ENCODE measurements at regions of chr1 and their contacts with region 1.

Region 1: GRCh38 chr1:151399890-151400495 is 620 bp downstream of the PSMB4 start:
- DNase-seq: peak; percentile 27
- H3K4me3 Mint-ChIP-seq: peak overlapping the region; percentile 93
- H3K27ac Mint-ChIP-seq: peak overlapping the region; percentile 99
- H3K4me1 Mint-ChIP-seq: peaks cover 20% of the 10 kb centered on the region
- H3K27me3 Mint-ChIP-seq: no peaks in the 10 kb centered on the region
- CTCF ChIP-seq: no peak

Region 2: GRCh38 chr1:151281969-151282882 is 117.8 kb before region 1 on chr1 and contains the start of gene ZNF687:
- CTCF ChIA-PET with region 1: interaction called, 4 read pairs
- POLR2A ChIA-PET with region 1: interaction called, 13 read pairs
- intact Hi-C with region 1: loop called (anchors 1 kb)
- DNase-seq: peak; percentile 100
- H3K4me3 Mint-ChIP-seq: peak within 1 kb of the TSS; percentile 97
- H3K27ac Mint-ChIP-seq: peak within 1 kb of the TSS; percentile 99
- H3K4me1 Mint-ChIP-seq: peaks cover 19% of the 10 kb centered on the region
- H3K27me3 Mint-ChIP-seq: peaks cover 9% of the 10 kb centered on the region
- CTCF ChIP-seq: no peak
- total RNA-seq, gene ZNF687: 26.3 and 27.5 TPM in 2 replicates

Region 3: GRCh38 chr1:151327223-151327902 is 72.6 kb before region 1 on chr1 and contains the start of gene PI4KB:
- CTCF ChIA-PET with region 1: interaction called, 3 read pairs
- POLR2A ChIA-PET with region 1: interaction called, 53 read pairs
- intact Hi-C with region 1: no loop called
- DNase-seq: peak; percentile 100
- H3K4me3 Mint-ChIP-seq: peak within 1 kb of the TSS; percentile 89
- H3K27ac Mint-ChIP-seq: peak within 1 kb of the TSS; percentile 90
- H3K4me1 Mint-ChIP-seq: peaks cover 36% of the 10 kb centered on the region
- H3K27me3 Mint-ChIP-seq: no peaks in the 10 kb centered on the region
- CTCF ChIP-seq: no peak
- total RNA-seq, gene PI4KB: 75.3 and 90.1 TPM in 2 replicates

Region 4: DNA sequence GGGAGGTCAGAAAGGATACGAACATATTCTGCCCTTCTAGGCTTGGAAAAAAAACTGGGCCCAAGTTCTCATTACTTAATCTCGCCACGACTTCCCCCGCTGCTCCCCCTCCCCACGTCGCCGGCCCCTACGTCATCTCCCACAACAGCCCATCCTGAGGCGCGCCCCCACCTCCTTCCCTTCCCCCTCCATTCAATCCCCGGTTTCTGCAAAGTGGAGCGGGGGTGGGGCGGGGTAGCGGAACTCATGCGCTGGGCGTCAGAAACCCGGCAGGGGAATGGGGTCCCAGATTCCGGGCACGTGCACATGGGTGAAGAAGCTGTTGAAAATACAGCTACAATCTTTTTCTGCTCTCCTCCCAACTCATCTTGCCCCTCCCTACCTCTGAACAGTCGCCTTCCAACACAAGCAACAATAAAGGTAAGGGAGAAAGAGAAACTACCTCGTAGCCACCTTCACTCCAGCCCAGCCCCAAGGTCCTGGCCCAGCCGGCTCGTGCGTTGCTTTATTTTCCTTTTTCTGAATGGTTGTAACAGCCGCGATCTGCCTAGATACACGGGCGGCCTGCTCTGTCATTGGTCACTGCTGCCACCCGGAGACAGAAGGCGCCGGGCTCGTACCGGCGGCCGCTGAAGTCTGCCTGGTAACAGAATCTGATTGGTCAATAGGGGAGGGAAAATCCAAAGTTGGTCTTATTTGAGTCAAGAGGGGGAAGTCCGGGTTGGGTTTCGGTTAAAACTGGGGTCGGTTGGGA is 53.0 kb before region 1 on chr1 and contains the start of gene RFX5:
- CTCF ChIA-PET with region 1: interaction called, 4 read pairs
- POLR2A ChIA-PET with region 1: interaction called, 12 read pairs
- intact Hi-C with region 1: loop called (anchors 1 kb)
- DNase-seq: peak; percentile 99
- H3K4me3 Mint-ChIP-seq: peak within 1 kb of the TSS; percentile 94
- H3K27ac Mint-ChIP-seq: peak within 1 kb of the TSS; percentile 97
- H3K4me1 Mint-ChIP-seq: peaks cover 28% of the 10 kb centered on the region
- H3K27me3 Mint-ChIP-seq: no peaks in the 10 kb centered on the region
- CTCF ChIP-seq: no peak
- total RNA-seq, gene RFX5: 19.2 and 26.5 TPM in 2 replicates

Region 5: GRCh38 chr1:151372061-151372934 is 27.7 kb before region 1 on chr1 and contains the start of gene SELENBP1:
- CTCF ChIA-PET with region 1: interaction called, 7 read pairs
- POLR2A ChIA-PET with region 1: interaction called, 60 read pairs
- intact Hi-C with region 1: no loop called
- DNase-seq: peak; percentile 94
- H3K4me3 Mint-ChIP-seq: peak within 1 kb of the TSS; percentile 69
- H3K27ac Mint-ChIP-seq: peak within 1 kb of the TSS; percentile 13
- H3K4me1 Mint-ChIP-seq: peaks cover 25% of the 10 kb centered on the region
- H3K27me3 Mint-ChIP-seq: peaks cover 7% of the 10 kb centered on the region
- CTCF ChIP-seq: no peak
- total RNA-seq, gene SELENBP1: 8.2 and 11.6 TPM in 2 replicates

Region 6: DNA sequence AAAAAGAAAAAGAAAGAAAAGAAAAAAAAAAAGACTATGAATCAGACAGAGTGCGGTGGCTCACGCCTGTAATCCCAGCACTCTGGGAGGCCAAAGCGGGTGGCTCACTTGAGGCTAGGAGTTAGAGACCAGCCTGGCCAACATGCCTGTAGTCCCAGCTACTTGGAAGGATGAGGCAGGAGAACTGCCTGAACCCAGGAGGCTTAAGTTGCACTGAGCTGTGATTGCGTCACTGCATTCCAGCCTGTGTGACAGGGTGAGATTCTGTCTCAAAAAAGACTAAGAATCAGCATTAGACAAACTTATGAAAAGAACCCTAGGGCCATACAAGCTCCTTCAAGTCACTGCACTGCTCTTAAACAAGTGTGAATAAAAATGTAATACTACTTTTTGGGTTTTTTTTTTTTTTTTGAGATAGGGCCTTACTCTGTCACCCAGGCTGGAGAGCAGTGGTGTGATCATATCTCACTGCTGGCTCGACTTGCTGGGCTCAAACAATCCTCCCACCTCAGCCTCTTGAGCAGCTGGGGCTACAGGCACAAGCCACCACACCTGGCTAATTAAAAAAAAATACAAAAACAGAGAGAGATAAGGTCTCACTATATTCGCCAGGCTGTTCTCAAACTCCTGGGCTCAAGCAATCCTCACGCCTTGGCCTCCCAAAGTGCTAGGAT is 16.4 kb after region 1 on chr1:
- CTCF ChIA-PET with region 1: interaction called, 11 read pairs
- POLR2A ChIA-PET with region 1: interaction called, 46 read pairs
- intact Hi-C with region 1: no loop called
- DNase-seq: peak; percentile 44
- H3K4me3 Mint-ChIP-seq: no peak overlapping the region
- H3K27ac Mint-ChIP-seq: no peak overlapping the region
- H3K4me1 Mint-ChIP-seq: no peaks in the 10 kb centered on the region
- H3K27me3 Mint-ChIP-seq: no peaks in the 10 kb centered on the region
- CTCF ChIP-seq: no peak